Heart left ventricle (tissue), 16 donors: ENCODE measurements at regions of chr1 and their contacts with region 1.

Region 1: DNA sequence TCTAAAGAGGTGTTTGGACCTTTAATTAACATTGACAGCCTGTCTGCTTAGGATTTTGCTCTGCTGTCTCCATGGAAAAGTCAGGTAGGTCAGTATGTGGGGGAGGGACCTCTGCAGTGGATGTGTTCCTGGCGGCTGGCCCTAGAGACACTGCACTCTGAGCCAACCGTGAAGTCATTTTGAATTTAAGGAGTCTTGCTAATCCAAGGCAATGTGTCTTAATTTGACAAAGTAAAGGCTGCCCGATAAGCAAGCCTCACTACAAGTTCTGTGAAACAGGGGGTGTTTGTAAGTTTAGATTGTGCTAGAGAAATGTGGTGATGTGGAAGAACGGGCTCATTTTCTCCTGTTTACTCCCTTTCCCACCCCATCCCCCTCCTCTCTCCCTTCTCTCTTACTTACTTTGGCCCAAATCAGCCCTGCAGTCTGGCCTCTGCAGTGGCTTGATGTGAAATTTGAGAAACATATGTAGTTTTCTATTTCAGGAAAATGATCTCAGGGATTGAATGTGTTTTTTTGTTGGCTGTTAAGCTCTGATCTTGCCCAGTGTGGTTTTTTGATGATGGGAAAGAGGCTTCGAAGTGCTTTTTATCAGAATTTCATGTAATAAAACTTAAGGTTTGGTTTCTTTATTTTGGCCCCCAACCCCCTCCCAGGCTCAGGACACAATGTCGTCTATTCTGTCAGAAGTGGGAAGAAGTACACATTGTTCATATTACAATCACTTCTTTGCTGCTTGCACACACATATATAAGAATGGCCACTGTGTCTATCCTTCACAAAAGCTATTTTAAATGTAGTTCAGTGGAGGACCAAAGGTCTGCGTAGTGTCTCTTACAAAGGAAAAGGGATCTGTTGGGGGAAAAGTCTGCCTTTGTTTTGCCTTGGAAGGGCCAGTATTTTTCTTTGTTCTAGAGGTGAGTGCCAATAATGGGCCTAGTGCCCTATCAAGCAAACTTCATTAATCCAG is 96.6 kb downstream of the FGGY start:
- DNase-seq: peak; percentile 76 to 87 (median 85)
- ATAC-seq: peak; percentile 96 to 98 (median 98)
- H3K4me3 ChIP-seq: peak overlapping the region in 3 of 12 donors; percentile 4 to 10 (median 5)
- H3K27ac ChIP-seq: peak overlapping the region; percentile 67 to 95 (median 88)
- H3K4me1 ChIP-seq: peaks cover 0 to 39% (median 24%) of the 10 kb centered on the region in 12 donors
- H3K27me3 ChIP-seq: no peaks in the 10 kb centered on the region
- CTCF ChIP-seq: no peak
- POLR2A ChIP-seq: no peak

Region 2: DNA sequence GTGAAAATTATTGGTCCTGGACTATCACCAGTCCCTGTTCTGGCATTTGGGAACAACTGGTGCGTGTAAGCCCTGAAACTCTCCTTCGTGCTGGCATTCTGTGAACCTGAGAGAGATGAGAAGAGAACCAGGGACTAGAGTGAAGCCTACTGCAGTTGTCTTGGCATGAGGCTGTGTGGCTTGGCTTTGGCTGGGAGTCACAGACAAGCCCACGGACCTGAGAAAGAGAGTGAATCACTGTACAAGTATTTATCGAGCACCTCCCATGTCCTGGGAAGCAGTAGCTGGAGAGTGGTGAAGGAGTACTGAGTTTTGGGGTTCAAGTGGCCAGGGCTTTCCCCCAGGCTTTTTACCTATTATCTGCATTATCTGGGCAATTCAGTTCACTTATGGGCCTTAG is 33.3 kb before region 1 on chr1:
- intact Hi-C with region 1: no loop called
- DNase-seq: no peak
- ATAC-seq: peak in 2 of 4 donors; percentile 59 to 75
- H3K4me3 ChIP-seq: no peak overlapping the region
- H3K27ac ChIP-seq: no peak overlapping the region
- H3K4me1 ChIP-seq: peaks cover 0 to 13% (median 0%) of the 10 kb centered on the region in 12 donors
- H3K27me3 ChIP-seq: no peaks in the 10 kb centered on the region
- CTCF ChIP-seq: no peak
- POLR2A ChIP-seq: no peak

Region 3: GRCh38 chr1:59446257-59446901 is 52.9 kb after region 1 on chr1:
- intact Hi-C with region 1: loop called in 1 of 10 experiments (anchors 10 kb)
- DNase-seq: no peak
- ATAC-seq: peak; percentile 69 to 82 (median 77)
- H3K4me3 ChIP-seq: no peak overlapping the region
- H3K27ac ChIP-seq: peak overlapping the region in 11 of 12 donors; percentile 32 to 74 (median 60)
- H3K4me1 ChIP-seq: peaks cover 0 to 44% (median 20%) of the 10 kb centered on the region in 12 donors
- H3K27me3 ChIP-seq: no peaks in the 10 kb centered on the region
- CTCF ChIP-seq: no peak
- POLR2A ChIP-seq: no peak

Region 4: GRCh38 chr1:59596441-59596861 is 203.0 kb after region 1 on chr1:
- intact Hi-C with region 1: loop called in 1 of 10 experiments (anchors 2 kb)
- DNase-seq: peak in 3 of 5 donors; percentile 18 to 50 (median 34)
- ATAC-seq: peak in 3 of 4 donors; percentile 64 to 76 (median 72)
- H3K4me3 ChIP-seq: no peak overlapping the region
- H3K27ac ChIP-seq: peak overlapping the region in 7 of 12 donors; percentile 1 to 73 (median 34)
- H3K4me1 ChIP-seq: peaks cover 0 to 18% (median 10%) of the 10 kb centered on the region in 12 donors
- H3K27me3 ChIP-seq: no peaks in the 10 kb centered on the region
- CTCF ChIP-seq: no peak
- POLR2A ChIP-seq: no peak